ENCODE measurements at regions of chr6 and their contacts with region 1.

Region 1: DNA sequence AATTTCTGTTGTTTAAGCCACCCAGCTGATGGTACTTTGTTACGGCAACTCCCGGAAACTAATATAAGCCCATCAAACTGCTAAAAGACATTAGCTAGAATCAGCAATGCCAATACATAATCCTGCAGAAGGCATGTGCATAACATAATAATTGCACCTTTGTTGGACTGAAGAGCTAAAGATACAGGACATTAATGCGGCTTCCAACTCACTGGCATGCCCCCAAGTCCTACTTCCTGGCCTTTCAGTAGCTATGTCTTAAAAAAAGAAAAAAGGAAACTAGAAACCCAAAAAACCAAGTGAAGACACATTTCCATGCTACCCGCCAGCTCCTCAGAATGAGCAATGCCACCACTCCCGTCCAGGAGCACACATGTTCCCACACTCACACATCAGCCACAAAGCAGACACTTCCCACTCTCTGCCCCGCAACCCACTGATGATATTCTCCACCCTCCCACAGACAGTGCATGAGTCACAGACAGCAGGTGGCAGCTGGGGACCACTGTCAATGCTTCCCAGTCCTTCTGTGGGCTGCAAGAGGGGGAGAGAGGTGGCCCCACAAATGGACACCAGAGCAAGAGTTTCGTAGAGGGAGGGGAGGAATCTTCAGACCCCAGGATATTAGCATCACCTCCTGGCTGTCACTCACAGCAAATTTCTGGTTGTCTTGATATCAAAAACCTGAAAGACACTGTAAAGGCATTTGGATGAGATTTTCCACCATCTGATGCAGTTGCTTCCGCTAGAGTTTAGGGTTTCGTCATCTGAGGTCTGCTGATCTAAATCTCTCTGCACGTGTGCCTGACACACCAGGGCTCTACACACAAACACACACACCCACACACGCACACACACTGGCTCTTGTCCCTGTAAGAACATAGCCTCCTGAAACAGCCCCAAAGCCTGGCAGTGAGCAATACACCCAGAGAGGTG is 32.8 kb downstream of the GFOD1 start:
- DNase-seq: peak; percentile 55
- H3K4me3 Mint-ChIP-seq: peak overlapping the region; percentile 27
- H3K27ac Mint-ChIP-seq: peak overlapping the region; percentile 88
- H3K4me1 Mint-ChIP-seq: peaks cover 55% of the 10 kb centered on the region
- H3K27me3 Mint-ChIP-seq: peaks cover 1% of the 10 kb centered on the region

Region 2: GRCh38 chr6:13216236-13217014 is 238.1 kb before region 1 on chr6:
- intact Hi-C with region 1: no loop called
- DNase-seq: no peak
- H3K4me3 Mint-ChIP-seq: no peak overlapping the region
- H3K27ac Mint-ChIP-seq: no peak overlapping the region
- H3K4me1 Mint-ChIP-seq: no peaks in the 10 kb centered on the region
- H3K27me3 Mint-ChIP-seq: peaks cover 25% of the 10 kb centered on the region

Region 3: DNA sequence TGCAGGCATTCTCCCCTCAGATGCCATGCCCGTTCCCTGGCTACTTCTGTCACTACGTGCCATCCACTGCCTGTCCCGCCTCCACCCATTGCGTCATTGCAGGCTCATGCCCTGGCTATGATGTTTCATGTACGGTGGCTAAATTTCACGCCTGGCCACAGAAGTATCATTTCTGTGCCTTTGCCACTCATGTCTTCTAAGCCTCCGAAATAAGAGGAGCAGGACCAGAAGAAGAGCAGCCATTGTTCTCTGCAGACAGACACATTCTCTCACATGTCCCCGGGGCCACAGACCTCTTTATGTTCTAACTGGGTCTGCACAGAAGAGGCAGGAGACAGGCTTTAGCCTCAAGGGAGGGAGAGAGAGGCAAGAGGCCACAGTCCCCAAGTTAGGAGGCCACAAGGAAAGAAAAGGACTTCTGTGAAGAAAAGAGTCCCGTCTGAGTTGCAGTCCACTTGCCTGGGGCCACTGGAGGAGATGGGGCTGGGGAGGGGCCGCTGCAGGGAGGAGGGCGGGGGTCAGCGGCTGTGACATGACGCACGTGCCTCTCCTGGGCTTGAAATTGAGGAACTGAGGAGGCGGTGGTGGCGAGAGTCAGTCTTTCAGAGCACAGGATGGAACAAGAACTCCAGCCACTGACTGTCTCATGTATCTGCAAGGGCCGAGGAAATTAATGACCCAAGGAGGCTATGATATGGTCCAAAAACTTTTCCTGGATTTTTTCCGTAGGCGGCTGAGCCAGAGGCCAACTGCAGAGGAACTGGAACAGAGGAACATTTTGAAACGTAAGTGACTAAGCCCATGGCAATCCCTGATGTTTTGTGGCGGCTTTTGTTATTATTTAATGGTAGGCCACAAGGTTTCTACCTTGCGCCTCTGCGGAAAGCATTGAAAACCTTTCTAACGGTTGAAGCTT is 182.2 kb before region 1 on chr6:
- intact Hi-C with region 1: loop called (anchors 1 kb)
- DNase-seq: no peak
- H3K4me3 Mint-ChIP-seq: no peak overlapping the region
- H3K27ac Mint-ChIP-seq: no peak overlapping the region
- H3K4me1 Mint-ChIP-seq: peaks cover 24% of the 10 kb centered on the region
- H3K27me3 Mint-ChIP-seq: peaks cover 7% of the 10 kb centered on the region

Region 4: GRCh38 chr6:13355043-13355951 is 99.3 kb before region 1 on chr6:
- intact Hi-C with region 1: loop called (anchors 1 kb)
- DNase-seq: peak; percentile 36
- H3K4me3 Mint-ChIP-seq: peak overlapping the region; percentile 75
- H3K27ac Mint-ChIP-seq: peak overlapping the region; percentile 95
- H3K4me1 Mint-ChIP-seq: peaks cover 67% of the 10 kb centered on the region
- H3K27me3 Mint-ChIP-seq: no peaks in the 10 kb centered on the region

Region 5: GRCh38 chr6:13466304-13467215 is 12.0 kb after region 1 on chr6:
- intact Hi-C with region 1: loop called (anchors 1 kb)
- DNase-seq: no peak
- H3K4me3 Mint-ChIP-seq: no peak overlapping the region
- H3K27ac Mint-ChIP-seq: peak overlapping the region; percentile 85
- H3K4me1 Mint-ChIP-seq: peaks cover 46% of the 10 kb centered on the region
- H3K27me3 Mint-ChIP-seq: no peaks in the 10 kb centered on the region

Region 6: GRCh38 chr6:13538084-13538483 is 83.5 kb after region 1 on chr6:
- intact Hi-C with region 1: loop called (anchors 5 kb)
- DNase-seq: no peak
- H3K4me3 Mint-ChIP-seq: no peak overlapping the region
- H3K27ac Mint-ChIP-seq: no peak overlapping the region
- H3K4me1 Mint-ChIP-seq: no peaks in the 10 kb centered on the region
- H3K27me3 Mint-ChIP-seq: peaks cover 3% of the 10 kb centered on the region

Region 7: DNA sequence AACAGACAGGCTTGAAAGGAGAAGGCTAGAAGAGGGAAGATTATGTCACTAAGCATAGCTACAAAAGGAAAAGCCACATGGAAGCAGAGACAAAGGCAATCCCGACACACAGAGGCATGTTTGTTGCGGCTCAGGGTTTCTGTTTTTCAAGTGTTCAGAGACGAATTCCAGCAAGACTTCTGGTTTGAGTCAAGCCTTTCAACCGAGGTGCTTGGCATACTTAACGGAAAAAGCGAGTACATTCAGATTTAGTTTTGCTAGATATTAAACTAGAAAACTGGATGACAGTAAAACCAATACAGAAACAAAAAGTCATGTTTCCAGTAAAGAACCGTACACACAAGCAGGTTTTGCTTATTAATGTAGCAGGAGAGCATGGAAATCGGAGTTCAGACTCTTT is 332.6 kb after region 1 on chr6:
- intact Hi-C with region 1: loop called (anchors 5 kb)
- DNase-seq: no peak
- H3K4me3 Mint-ChIP-seq: peak overlapping the region; percentile 41
- H3K27ac Mint-ChIP-seq: peak overlapping the region; percentile 82
- H3K4me1 Mint-ChIP-seq: peaks cover 33% of the 10 kb centered on the region
- H3K27me3 Mint-ChIP-seq: no peaks in the 10 kb centered on the region